Activated CD4-positive, alpha-beta T cell treated with anti-CD3 and anti-CD28 coated beads for 36 hours (primary cell): ENCODE measurements at regions of chr5 and their contacts with region 1.

Region 1: GRCh38 chr5:95781101-95781583 is 41.4 kb downstream of the GLRX start:
- DNase-seq: peak; percentile 84
- ATAC-seq: peak; percentile 99
- H3K4me3 Mint-ChIP-seq: no peak overlapping the region
- H3K27ac Mint-ChIP-seq: peak overlapping the region; percentile 12
- H3K4me1 Mint-ChIP-seq: peaks cover 5% of the 10 kb centered on the region
- H3K27me3 Mint-ChIP-seq: no peaks in the 10 kb centered on the region

Region 2: DNA sequence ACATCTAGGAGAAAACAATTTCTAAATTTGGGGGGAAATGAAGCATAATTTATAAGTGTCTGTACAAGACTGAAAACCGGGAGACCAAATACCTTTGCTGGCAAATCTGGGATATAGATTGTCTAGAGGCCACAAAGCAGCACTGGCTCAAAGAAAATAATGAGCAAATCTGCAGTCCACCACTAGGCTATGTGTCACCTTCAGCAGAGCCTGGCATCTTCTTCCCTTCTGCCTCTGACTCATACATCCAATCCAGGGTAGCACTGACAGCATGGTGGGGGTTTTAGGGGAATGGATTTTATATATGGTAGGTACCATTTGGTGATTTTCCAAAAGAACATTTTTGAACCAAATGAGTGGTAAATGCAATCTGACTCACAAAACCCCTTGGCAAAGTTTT is 377.1 kb before region 1 on chr5:
- CTCF ChIA-PET with region 1: no interaction called
- POLR2A ChIA-PET with region 1: no interaction called
- intact Hi-C with region 1: no loop called
- DNase-seq: no peak
- ATAC-seq: no peak
- H3K4me3 Mint-ChIP-seq: no peak overlapping the region
- H3K27ac Mint-ChIP-seq: no peak overlapping the region
- H3K4me1 Mint-ChIP-seq: no peaks in the 10 kb centered on the region
- H3K27me3 Mint-ChIP-seq: peaks cover 18% of the 10 kb centered on the region

Region 3: GRCh38 chr5:95730730-95731570 is 50.2 kb before region 1 on chr5 and contains the start of gene RHOBTB3:
- CTCF ChIA-PET with region 1: interaction called, 13 read pairs
- POLR2A ChIA-PET with region 1: no interaction called
- intact Hi-C with region 1: no loop called
- DNase-seq: peak; percentile 62
- ATAC-seq: peak; percentile 52
- H3K4me3 Mint-ChIP-seq: peak within 1 kb of the TSS; percentile 75
- H3K27ac Mint-ChIP-seq: peak within 1 kb of the TSS; percentile 72
- H3K4me1 Mint-ChIP-seq: peaks cover 64% of the 10 kb centered on the region
- H3K27me3 Mint-ChIP-seq: peaks cover 33% of the 10 kb centered on the region
- total RNA-seq, gene RHOBTB3: 3.3 to 3.5 TPM

Region 4: GRCh38 chr5:95794070-95794516 is 13.0 kb after region 1 on chr5:
- CTCF ChIA-PET with region 1: interaction called, 31 read pairs
- POLR2A ChIA-PET with region 1: no interaction called
- intact Hi-C with region 1: no loop called
- DNase-seq: no peak
- ATAC-seq: no peak
- H3K4me3 Mint-ChIP-seq: no peak overlapping the region
- H3K27ac Mint-ChIP-seq: no peak overlapping the region
- H3K4me1 Mint-ChIP-seq: no peaks in the 10 kb centered on the region
- H3K27me3 Mint-ChIP-seq: no peaks in the 10 kb centered on the region

Region 5: GRCh38 chr5:95808686-95809413 is 27.7 kb after region 1 on chr5:
- CTCF ChIA-PET with region 1: interaction called, 41 read pairs
- POLR2A ChIA-PET with region 1: interaction called, 3 read pairs
- intact Hi-C with region 1: no loop called
- DNase-seq: peak; percentile 87
- ATAC-seq: peak; percentile 99
- H3K4me3 Mint-ChIP-seq: peak overlapping the region; percentile 28
- H3K27ac Mint-ChIP-seq: peak overlapping the region; percentile 85
- H3K4me1 Mint-ChIP-seq: peaks cover 56% of the 10 kb centered on the region
- H3K27me3 Mint-ChIP-seq: no peaks in the 10 kb centered on the region

Region 6: GRCh38 chr5:95835682-95836385 is 54.7 kb after region 1 on chr5:
- CTCF ChIA-PET with region 1: interaction called, 17 read pairs
- POLR2A ChIA-PET with region 1: no interaction called
- intact Hi-C with region 1: no loop called
- DNase-seq: peak; percentile 49
- ATAC-seq: no peak
- H3K4me3 Mint-ChIP-seq: peak overlapping the region; percentile 79
- H3K27ac Mint-ChIP-seq: peak overlapping the region; percentile 91
- H3K4me1 Mint-ChIP-seq: peaks cover 44% of the 10 kb centered on the region
- H3K27me3 Mint-ChIP-seq: no peaks in the 10 kb centered on the region